CD4-positive, alpha-beta memory T cell (primary cell): ENCODE measurements at regions of chr7 and their contacts with region 1.

Region 1: DNA sequence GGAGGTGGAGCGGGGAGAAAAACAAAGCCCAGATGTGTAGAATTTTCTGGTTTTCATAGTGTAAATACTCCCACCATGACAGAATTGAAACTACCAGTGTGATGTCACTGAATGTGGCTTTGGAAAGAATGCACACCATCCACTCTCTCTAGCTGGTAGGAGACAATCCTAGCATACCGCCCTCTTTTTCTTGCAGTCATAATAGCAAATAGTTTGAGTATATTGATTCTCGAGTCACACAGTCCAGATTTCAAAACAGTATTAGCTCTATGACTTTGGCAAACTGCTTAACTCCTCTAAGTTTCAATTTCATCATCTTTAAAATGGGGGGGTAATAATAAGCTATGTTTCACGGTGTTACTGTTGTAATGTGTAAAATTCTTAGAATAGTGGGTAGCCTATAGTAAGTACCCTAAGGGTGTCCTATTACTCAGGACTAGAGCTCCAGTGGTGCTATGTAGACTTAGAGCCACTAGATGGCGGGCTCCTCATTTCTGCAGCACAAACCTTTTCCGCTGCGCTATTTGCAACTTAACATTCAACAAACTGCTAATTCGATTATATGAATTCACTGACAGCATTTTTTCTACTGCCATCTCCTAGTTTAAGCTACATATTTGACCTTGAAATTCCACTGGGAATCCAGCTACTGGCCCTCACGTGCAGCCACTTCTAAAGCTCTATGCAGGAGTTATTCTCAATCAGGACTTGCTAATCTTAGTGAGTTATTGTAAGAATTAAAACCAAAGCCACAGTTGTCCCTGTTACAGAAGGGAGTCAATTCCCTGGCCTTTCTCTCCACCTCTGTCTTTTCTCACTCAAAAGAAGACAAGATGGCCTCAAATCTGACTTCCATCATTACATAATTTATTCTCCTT is 18.7 kb downstream of the TAS2R40 start:
- DNase-seq: peak; percentile 74 to 79 (median 77)
- H3K4me3 ChIP-seq: no peak overlapping the region
- H3K4me3 Mint-ChIP-seq: peak overlapping the region in 3 of 8 donors; percentile 30 to 57 (median 37)
- H3K27ac ChIP-seq: no peak overlapping the region
- H3K27ac Mint-ChIP-seq: peak overlapping the region in 5 of 7 donors; percentile 14 to 77 (median 48)
- H3K4me1 ChIP-seq: peaks cover 24% of the 10 kb centered on the region
- H3K4me1 Mint-ChIP-seq: peaks cover 24 to 40% (median 31%) of the 10 kb centered on the region in 4 donors
- H3K27me3 ChIP-seq: peaks cover 6% of the 10 kb centered on the region
- H3K27me3 Mint-ChIP-seq: peaks cover 2 to 11% of the 10 kb centered on the region in 2 donors

Region 2: DNA sequence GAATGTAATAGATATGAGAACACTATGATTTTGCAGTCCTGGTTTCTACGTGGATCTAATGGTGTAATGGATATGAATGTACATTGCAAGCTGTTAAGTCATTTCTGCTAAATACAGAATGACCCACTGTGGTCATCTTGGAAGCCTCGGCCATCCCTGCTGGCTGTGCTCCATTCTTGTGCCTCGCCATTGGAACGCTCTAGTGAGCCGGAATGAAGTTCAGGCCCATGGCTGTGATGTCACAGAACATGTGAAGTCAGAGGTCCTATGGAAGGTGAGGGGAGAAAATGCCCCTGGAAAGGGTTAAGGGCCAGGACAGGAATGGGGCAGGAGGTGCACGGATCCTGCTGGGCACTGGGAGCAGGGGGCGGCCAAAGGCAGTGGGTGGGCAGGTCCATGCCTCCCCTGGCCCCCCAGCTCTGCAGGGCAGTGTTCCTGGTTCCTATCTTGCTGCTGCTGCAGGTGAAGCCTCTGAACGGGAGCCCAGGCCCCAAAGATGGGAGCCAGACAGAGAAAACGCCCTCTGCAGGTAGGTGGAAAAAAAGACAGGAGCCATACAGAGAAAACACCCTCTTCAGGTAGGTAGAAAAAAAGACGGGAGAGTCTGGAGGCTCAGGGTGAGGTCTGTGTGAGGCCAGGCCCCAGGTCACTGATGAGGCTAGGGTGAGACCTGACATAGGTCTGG is 301.2 kb before region 1 on chr7 and contains the start of gene LLCFC1:
- CTCF ChIA-PET with region 1: no interaction called
- POLR2A ChIA-PET with region 1: no interaction called
- intact Hi-C with region 1: no loop called
- DNase-seq: peak in 2 of 5 donors; percentile 3 to 9
- H3K4me3 ChIP-seq: no peak within 1 kb of the TSS
- H3K4me3 Mint-ChIP-seq: no peak within 1 kb of the TSS
- H3K27ac ChIP-seq: no peak within 1 kb of the TSS
- H3K27ac Mint-ChIP-seq: no peak within 1 kb of the TSS
- H3K4me1 ChIP-seq: no peaks in the 10 kb centered on the region
- H3K4me1 Mint-ChIP-seq: peaks cover 0 to 2% (median 0%) of the 10 kb centered on the region in 4 donors
- H3K27me3 ChIP-seq: no peaks in the 10 kb centered on the region
- H3K27me3 Mint-ChIP-seq: peaks cover 18 to 26% of the 10 kb centered on the region in 2 donors
- total RNA-seq, gene LLCFC1: not detected

Region 3: DNA sequence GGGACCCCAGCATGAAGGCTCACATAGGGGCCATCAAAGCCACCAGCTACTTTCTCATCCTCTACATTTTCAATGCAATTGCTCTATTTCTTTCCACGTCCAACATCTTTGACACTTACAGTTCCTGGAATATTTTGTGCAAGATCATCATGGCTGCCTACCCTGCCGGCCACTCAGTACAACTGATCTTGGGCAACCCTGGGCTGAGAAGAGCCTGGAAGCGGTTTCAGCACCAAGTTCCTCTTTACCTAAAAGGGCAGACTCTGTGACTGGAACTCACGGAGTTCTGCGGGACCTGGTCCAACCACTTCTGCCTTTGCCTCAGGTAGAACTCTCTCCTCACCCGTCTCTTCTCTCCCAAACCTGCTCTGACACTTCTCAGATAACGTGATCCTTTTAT is 17.7 kb before region 1 on chr7:
- CTCF ChIA-PET with region 1: interaction called, 10 read pairs
- POLR2A ChIA-PET with region 1: interaction called, 4 read pairs
- intact Hi-C with region 1: no loop called
- DNase-seq: no peak
- H3K4me3 ChIP-seq: no peak overlapping the region
- H3K4me3 Mint-ChIP-seq: no peak overlapping the region
- H3K27ac ChIP-seq: no peak overlapping the region
- H3K27ac Mint-ChIP-seq: no peak overlapping the region
- H3K4me1 ChIP-seq: no peaks in the 10 kb centered on the region
- H3K4me1 Mint-ChIP-seq: no peaks in the 10 kb centered on the region
- H3K27me3 ChIP-seq: no peaks in the 10 kb centered on the region
- H3K27me3 Mint-ChIP-seq: peaks cover 19 to 25% of the 10 kb centered on the region in 2 donors

Region 4: GRCh38 chr7:143279186-143280098 is 38.9 kb after region 1 on chr7:
- CTCF ChIA-PET with region 1: interaction called, 82 read pairs
- POLR2A ChIA-PET with region 1: interaction called, 16 read pairs
- intact Hi-C with region 1: no loop called
- DNase-seq: peak; percentile 52 to 74 (median 60)
- H3K4me3 ChIP-seq: peak overlapping the region; percentile 1 to 48
- H3K4me3 Mint-ChIP-seq: peak overlapping the region; percentile 61 to 89 (median 81)
- H3K27ac ChIP-seq: peak overlapping the region; percentile 74
- H3K27ac Mint-ChIP-seq: peak overlapping the region; percentile 83 to 97 (median 94)
- H3K4me1 ChIP-seq: peaks cover 33% of the 10 kb centered on the region
- H3K4me1 Mint-ChIP-seq: peaks cover 34 to 40% (median 37%) of the 10 kb centered on the region in 4 donors
- H3K27me3 ChIP-seq: no peaks in the 10 kb centered on the region
- H3K27me3 Mint-ChIP-seq: no peaks in the 10 kb centered on the region

Region 5: GRCh38 chr7:143305423-143306070 is 65.0 kb after region 1 on chr7:
- CTCF ChIA-PET with region 1: interaction called, 513 read pairs
- POLR2A ChIA-PET with region 1: interaction called, 51 read pairs
- intact Hi-C with region 1: loop called (anchors 1 kb)
- DNase-seq: peak; percentile 49 to 65 (median 62)
- H3K4me3 ChIP-seq: no peak overlapping the region
- H3K4me3 Mint-ChIP-seq: no peak overlapping the region
- H3K27ac ChIP-seq: no peak overlapping the region
- H3K27ac Mint-ChIP-seq: peak overlapping the region; percentile 28 to 86 (median 59)
- H3K4me1 ChIP-seq: peaks cover 13% of the 10 kb centered on the region
- H3K4me1 Mint-ChIP-seq: peaks cover 21 to 44% (median 37%) of the 10 kb centered on the region in 4 donors
- H3K27me3 ChIP-seq: no peaks in the 10 kb centered on the region
- H3K27me3 Mint-ChIP-seq: no peaks in the 10 kb centered on the region

Region 6: DNA sequence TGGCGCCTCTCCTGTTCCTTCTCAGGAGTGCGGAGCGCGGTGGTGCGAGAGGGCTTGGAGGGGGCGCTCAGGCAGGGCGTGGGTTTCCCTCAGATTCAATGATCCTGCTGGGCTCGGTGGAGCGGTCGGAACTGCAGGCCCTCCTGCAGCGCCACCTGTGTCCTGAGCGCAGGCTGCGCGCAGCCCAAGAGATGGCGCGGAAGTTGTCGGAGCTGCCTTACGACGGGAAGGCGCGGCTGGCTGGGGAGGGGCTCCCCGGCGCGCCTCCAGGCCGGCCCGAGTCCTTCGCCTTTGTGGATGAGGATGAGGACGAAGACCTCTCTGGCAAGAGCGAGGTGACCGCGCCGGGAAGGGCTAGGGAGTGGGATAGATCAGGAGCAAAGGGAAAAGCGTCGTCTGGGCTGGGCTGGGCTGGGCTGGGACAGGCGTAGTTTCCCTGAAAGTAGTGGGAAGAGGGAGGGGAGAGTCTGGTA is 104.9 kb after region 1 on chr7:
- CTCF ChIA-PET with region 1: interaction called, 38 read pairs
- POLR2A ChIA-PET with region 1: interaction called, 3 read pairs
- intact Hi-C with region 1: loop called (anchors 1 kb)
- DNase-seq: peak; percentile 52 to 64 (median 58)
- H3K4me3 ChIP-seq: no peak overlapping the region
- H3K4me3 Mint-ChIP-seq: peak overlapping the region; percentile 74 to 87 (median 80)
- H3K27ac ChIP-seq: no peak overlapping the region
- H3K27ac Mint-ChIP-seq: peak overlapping the region in 4 of 7 donors; percentile 55 to 70 (median 68)
- H3K4me1 ChIP-seq: peaks cover 4% of the 10 kb centered on the region
- H3K4me1 Mint-ChIP-seq: peaks cover 5 to 9% (median 7%) of the 10 kb centered on the region in 4 donors
- H3K27me3 ChIP-seq: no peaks in the 10 kb centered on the region
- H3K27me3 Mint-ChIP-seq: peaks cover 0 to 6% of the 10 kb centered on the region in 2 donors

Region 7: DNA sequence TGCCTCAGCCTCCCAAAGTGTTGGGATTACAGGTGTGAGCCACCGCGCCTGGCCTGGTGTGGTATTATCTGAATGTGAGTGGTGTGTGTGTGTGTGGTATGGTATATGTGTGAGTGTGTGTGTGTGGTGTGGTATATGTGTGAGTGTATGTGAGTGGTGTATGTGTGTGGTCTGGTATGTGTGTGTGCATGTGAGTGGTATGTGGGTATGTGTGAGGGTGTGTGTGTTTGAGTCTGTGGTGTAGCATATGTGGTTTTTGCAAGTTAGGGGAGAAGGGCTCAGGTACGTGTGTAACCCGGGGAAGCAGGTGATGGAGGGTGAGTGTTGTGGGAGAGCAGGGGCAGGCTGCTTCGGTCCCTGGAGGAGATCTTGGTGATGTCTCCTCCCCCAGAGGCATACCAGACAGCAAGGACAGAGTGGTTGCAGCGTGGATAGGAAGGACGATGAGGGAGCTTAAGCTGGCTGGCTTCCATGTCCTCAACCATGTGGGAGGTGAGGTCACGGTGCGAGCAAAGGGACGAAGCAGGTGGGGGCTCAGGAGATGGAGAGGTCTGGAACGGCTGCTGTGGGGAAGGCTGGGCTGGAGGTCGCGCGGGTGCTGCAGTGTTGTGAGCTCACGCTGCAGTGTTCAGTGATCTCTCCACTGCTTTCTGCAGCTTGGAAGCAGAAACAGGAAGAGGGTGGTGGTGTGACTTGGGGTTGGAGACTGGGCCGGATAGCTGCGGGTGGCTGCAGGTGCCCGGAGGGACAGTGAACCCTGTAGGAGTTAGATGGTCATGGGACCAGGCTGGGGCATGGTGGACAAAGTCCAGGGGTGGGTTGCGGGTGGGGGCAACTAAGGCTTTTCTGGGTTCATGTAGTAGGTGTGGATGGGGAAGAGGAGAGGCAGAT is 145.6 kb after region 1 on chr7:
- CTCF ChIA-PET with region 1: interaction called, 18 read pairs
- POLR2A ChIA-PET with region 1: interaction called, 21 read pairs
- intact Hi-C with region 1: loop called (anchors 2 kb)
- DNase-seq: peak; percentile 47 to 74 (median 56)
- H3K4me3 ChIP-seq: peak overlapping the region in 1 of 2 donors; percentile 46
- H3K4me3 Mint-ChIP-seq: no peak overlapping the region
- H3K27ac ChIP-seq: peak overlapping the region; percentile 49
- H3K27ac Mint-ChIP-seq: no peak overlapping the region
- H3K4me1 ChIP-seq: peaks cover 55% of the 10 kb centered on the region
- H3K4me1 Mint-ChIP-seq: peaks cover 5 to 16% (median 11%) of the 10 kb centered on the region in 4 donors
- H3K27me3 ChIP-seq: no peaks in the 10 kb centered on the region
- H3K27me3 Mint-ChIP-seq: no peaks in the 10 kb centered on the region

Region 8: GRCh38 chr7:143479055-143479766 is 238.7 kb after region 1 on chr7:
- CTCF ChIA-PET with region 1: no interaction called
- POLR2A ChIA-PET with region 1: no interaction called
- intact Hi-C with region 1: no loop called
- DNase-seq: no peak
- H3K4me3 ChIP-seq: no peak overlapping the region
- H3K4me3 Mint-ChIP-seq: no peak overlapping the region
- H3K27ac ChIP-seq: no peak overlapping the region
- H3K27ac Mint-ChIP-seq: no peak overlapping the region
- H3K4me1 ChIP-seq: no peaks in the 10 kb centered on the region
- H3K4me1 Mint-ChIP-seq: peaks cover 10 to 30% (median 17%) of the 10 kb centered on the region in 4 donors
- H3K27me3 ChIP-seq: no peaks in the 10 kb centered on the region
- H3K27me3 Mint-ChIP-seq: peaks cover 0 to 1% of the 10 kb centered on the region in 2 donors

Region 9: DNA sequence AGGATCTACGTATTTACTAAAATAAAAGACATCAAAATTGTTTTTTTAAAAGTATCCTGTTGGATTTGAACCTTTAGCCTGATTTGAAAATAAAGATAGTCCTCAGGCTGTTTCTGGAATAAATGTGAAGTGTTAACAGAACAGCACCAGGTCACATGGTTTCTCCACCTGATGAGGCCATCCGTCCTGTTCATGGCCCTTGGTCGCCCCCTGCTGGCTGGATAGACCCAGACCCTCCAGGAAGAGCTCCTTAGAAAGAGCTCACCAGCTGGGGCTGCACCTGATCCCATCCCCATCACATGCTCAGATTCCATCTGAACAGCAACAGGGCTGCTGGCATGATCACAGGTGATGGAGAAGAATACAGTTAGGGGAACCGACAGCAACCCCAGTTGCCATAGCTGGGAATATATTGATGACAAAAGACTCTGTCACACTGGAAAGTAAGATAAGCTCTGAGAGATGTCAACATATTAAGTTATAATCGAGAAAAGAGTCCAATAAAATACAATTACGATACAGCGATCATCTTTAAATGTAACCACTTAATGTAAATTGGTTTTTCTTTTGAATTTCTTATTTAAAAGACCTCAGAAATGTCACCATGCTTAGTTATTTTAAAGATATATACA is 887.3 kb after region 1 on chr7:
- CTCF ChIA-PET with region 1: interaction called, 4 read pairs
- POLR2A ChIA-PET with region 1: no interaction called
- intact Hi-C with region 1: loop called (anchors 5 kb)
- DNase-seq: peak; percentile 73 to 83 (median 76)
- H3K4me3 ChIP-seq: no peak overlapping the region
- H3K4me3 Mint-ChIP-seq: no peak overlapping the region
- H3K27ac ChIP-seq: no peak overlapping the region
- H3K27ac Mint-ChIP-seq: peak overlapping the region in 1 of 7 donors; percentile 17
- H3K4me1 ChIP-seq: no peaks in the 10 kb centered on the region
- H3K4me1 Mint-ChIP-seq: no peaks in the 10 kb centered on the region
- H3K27me3 ChIP-seq: no peaks in the 10 kb centered on the region
- H3K27me3 Mint-ChIP-seq: peaks cover 2 to 5% of the 10 kb centered on the region in 2 donors